Transverse colon (tissue), 4 donors: ENCODE measurements at regions of chr14 and their contacts with region 1.

Region 1: DNA sequence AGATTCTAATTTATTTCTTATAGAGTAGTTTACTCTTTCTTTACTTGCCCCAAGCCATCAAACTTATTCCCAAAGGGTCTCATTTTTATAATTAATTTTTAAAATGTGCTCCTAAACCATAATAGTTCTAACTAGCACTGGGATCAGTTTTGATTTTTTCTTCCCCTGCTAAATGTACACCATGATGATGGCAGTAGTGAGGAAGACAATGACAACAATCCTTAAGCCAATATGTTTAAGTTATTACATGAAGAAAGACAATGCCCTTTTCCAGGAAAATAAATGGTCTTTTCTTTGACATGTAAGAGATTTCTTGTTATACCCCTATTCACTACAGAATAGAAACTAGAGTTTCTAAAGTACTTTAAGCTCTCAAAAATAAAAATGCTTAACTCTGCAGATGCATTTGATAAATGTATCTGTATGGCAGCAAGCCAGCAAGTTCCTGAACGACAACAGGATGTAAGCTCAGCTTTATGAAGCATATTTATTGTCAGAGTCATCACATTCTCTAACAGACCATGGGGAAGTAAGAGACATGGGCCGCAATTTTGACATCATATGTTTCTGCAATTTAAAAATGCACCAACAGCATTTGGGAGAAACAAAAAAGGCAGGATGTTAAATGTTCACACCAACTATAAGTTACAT is 36.0 kb upstream of the SNX6 start:
- DNase-seq: peak; percentile 17
- H3K4me3 ChIP-seq: no peak overlapping the region
- H3K27ac ChIP-seq: peak overlapping the region; percentile 20 to 37 (median 30)
- H3K4me1 ChIP-seq: no peaks in the 10 kb centered on the region
- H3K27me3 ChIP-seq: no peaks in the 10 kb centered on the region
- CTCF ChIP-seq: no peak
- EP300 ChIP-seq: no peak
- POLR2A ChIP-seq: no peak

Region 2: DNA sequence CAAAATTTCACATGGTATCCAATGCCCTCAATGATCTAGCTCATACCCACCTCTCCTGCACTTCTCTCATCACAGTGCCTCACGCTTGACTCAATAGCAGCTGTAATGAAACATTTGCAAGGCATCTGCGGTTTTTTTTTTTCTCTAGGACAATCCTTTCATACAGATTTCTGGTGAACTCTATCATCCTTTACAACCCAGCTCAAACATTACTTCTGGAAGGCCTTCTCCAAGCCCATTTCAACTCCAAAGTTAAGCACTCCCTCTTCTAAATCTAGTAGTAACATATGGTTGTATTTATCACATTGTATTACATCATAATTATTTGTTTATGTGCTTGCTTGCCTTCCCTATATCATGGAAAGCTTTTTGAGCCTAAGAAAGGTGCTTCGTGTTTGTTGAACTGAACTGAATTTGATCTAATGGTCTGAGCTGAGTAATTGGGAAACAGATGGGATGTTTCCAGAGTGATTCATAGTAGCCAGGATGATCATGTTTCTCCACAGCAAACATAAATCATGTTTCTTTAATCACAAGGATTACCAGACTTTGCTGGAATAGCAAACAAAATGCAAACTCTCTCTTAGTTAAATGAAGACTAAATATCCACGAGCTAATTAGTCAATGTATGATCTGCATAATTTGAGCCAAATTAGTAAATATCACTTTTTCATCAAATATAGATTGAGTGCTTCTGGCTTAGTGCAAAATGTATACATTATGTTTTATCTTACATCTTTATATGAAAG is 34.1 kb after region 1 on chr14:
- in situ Hi-C with region 1: no loop called
- intact Hi-C with region 1: loop called (anchors 2 kb)
- DNase-seq: no peak
- H3K4me3 ChIP-seq: no peak overlapping the region
- H3K27ac ChIP-seq: peak overlapping the region in 2 of 4 donors; percentile 28 to 41
- H3K4me1 ChIP-seq: peaks cover 0 to 11% (median 5%) of the 10 kb centered on the region in 4 donors
- H3K27me3 ChIP-seq: no peaks in the 10 kb centered on the region
- CTCF ChIP-seq: no peak
- EP300 ChIP-seq: no peak
- POLR2A ChIP-seq: no peak

Region 3: DNA sequence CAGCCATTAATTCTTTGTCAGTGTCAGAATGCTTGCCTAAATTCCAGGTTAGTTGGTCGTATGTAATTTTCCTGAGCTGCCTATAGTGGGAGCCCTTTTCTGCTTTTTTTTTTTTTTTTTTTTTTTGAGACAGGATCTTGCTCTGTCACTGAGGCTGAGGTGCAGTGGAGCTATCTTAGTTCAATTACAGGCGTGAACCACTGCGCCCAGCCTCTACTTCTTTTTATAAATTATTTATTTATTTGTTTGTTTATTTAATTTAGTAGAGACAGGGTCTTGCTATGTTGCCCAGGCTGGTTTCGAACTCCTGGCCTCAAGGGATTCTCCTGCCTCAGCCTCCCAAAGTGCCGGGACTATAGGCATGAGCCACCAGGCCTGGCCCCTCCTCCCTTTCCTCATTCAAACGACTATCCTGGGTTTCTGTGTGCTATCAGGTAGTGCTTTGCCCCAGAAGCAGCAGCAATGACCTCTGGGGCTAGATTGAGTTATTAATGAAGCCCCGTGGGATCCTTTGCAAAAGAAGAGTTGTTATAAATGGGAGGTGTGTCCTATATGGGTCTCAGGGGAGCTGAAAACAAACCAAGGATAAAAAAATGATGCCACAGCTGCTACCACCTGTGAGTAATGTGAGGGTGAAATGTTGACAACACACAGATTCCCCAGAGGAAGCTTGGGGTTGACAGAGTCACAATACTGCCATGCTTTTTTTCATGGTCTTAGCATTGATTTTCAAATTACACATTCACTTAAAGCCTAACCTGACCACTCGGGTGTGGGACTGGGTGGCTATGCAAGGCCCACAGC is 773.2 kb after region 1 on chr14:
- in situ Hi-C with region 1: loop called in 1 of 4 experiments (anchors 25 kb)
- intact Hi-C with region 1: no loop called
- DNase-seq: no peak
- H3K4me3 ChIP-seq: no peak overlapping the region
- H3K27ac ChIP-seq: no peak overlapping the region
- H3K4me1 ChIP-seq: no peaks in the 10 kb centered on the region
- H3K27me3 ChIP-seq: no peaks in the 10 kb centered on the region
- CTCF ChIP-seq: peak; percentile 12 to 45 (median 19)
- EP300 ChIP-seq: no peak
- POLR2A ChIP-seq: no peak